ENCODE measurements at regions of chr12 and their contacts with region 1.

Region 1: GRCh38 chr12:75908961-75909605 is 122.5 kb downstream of the PHLDA1 start:
- DNase-seq: no peak
- ATAC-seq: no peak
- H3K4me3 Mint-ChIP-seq: no peak overlapping the region
- H3K27ac Mint-ChIP-seq: no peak overlapping the region
- H3K4me1 Mint-ChIP-seq: peaks cover 24% of the 10 kb centered on the region
- H3K27me3 Mint-ChIP-seq: peaks cover 15% of the 10 kb centered on the region
- CTCF ChIP-seq: no peak

Region 2: GRCh38 chr12:75944097-75944904 is 35.2 kb after region 1 on chr12:
- CTCF ChIA-PET with region 1: no interaction called
- POLR2A ChIA-PET with region 1: interaction called, 3 read pairs
- intact Hi-C with region 1: loop called (anchors 2 kb)
- DNase-seq: peak; percentile 42
- ATAC-seq: peak; percentile 88
- H3K4me3 Mint-ChIP-seq: peak overlapping the region; percentile 55
- H3K27ac Mint-ChIP-seq: peak overlapping the region; percentile 96
- H3K4me1 Mint-ChIP-seq: peaks cover 32% of the 10 kb centered on the region
- H3K27me3 Mint-ChIP-seq: no peaks in the 10 kb centered on the region
- CTCF ChIP-seq: no peak

Measured in activated CD8-positive, alpha-beta T cell treated with anti-CD3 and anti-CD28 coated beads for 36 hours (primary cell).